GM12878 (cell line): ENCODE measurements at regions of chr3 and their contacts with region 1.

Region 1: GRCh38 chr3:62246116-62246515 is 127.2 kb downstream of the FEZF2 start:
- DNase-seq: no peak
- ATAC-seq: no peak
- H3K4me3 ChIP-seq: no peak overlapping the region
- H3K27ac ChIP-seq: no peak overlapping the region
- H3K4me1 ChIP-seq: no peaks in the 10 kb centered on the region
- H3K27me3 ChIP-seq: no peaks in the 10 kb centered on the region; a peak in 1 of 4 replicates
- CTCF ChIP-seq: no peak
- EP300 ChIP-seq: no peak
- POLR2A ChIP-seq: no peak
- RAD21 ChIP-seq: no peak

Region 2: DNA sequence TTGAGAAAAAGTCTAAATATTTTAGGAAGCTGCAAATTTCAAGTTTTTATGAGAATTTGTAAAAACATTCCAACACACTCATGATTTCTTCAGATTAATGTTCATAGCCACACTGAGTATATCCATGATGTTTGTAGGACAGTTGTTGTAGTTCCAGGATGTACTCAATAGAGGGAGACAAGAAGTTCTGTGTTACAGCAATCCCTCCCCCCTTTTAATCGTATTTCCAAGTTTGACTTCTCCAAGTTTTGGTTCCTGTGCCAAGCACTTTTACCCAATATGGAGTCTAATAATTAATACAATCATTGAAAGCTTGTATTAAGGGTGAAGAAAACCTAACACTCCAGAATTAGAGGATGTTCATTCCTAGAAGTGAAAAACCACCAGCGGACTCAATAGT is 16.2 kb before region 1 on chr3:
- CTCF ChIA-PET with region 1: interaction called, 3 read pairs
- POLR2A ChIA-PET with region 1: interaction called, 3 read pairs
- RAD21 ChIA-PET with region 1: no interaction called
- SMC1A ChIA-PET with region 1: interaction called, 11 read pairs
- in situ Hi-C with region 1: no loop called
- intact Hi-C with region 1: no loop called
- DNase-seq: no peak
- ATAC-seq: peak; percentile 36; the same call in 1 of the 3 replicates
- H3K4me3 ChIP-seq: no peak overlapping the region
- H3K27ac ChIP-seq: no peak overlapping the region
- H3K4me1 ChIP-seq: no peaks in the 10 kb centered on the region; the same call in 1 of the 2 replicates
- H3K27me3 ChIP-seq: no peaks in the 10 kb centered on the region; a peak in 1 of 4 replicates
- CTCF ChIP-seq: peak; percentile 7 to 28 (median 16); a peak in 1 of 6 replicates
- EP300 ChIP-seq: no peak
- POLR2A ChIP-seq: no peak
- RAD21 ChIP-seq: no peak

Region 3: GRCh38 chr3:62261121-62261520 is 15.0 kb after region 1 on chr3:
- CTCF ChIA-PET with region 1: interaction called, 29 read pairs
- POLR2A ChIA-PET with region 1: interaction called, 3 read pairs
- RAD21 ChIA-PET with region 1: interaction called, 6 read pairs
- SMC1A ChIA-PET with region 1: interaction called, 22 read pairs
- in situ Hi-C with region 1: no loop called
- intact Hi-C with region 1: no loop called
- DNase-seq: no peak
- ATAC-seq: peak; percentile 83
- H3K4me3 ChIP-seq: no peak overlapping the region
- H3K27ac ChIP-seq: no peak overlapping the region
- H3K4me1 ChIP-seq: no peaks in the 10 kb centered on the region
- H3K27me3 ChIP-seq: no peaks in the 10 kb centered on the region
- CTCF ChIP-seq: no peak
- EP300 ChIP-seq: no peak
- POLR2A ChIP-seq: no peak
- RAD21 ChIP-seq: no peak